Activated CD4-positive, alpha-beta memory T cell treated with anti-CD3 and anti-CD28 coated beads for 36 hours (primary cell): ENCODE measurements at regions of chr6 and their contacts with region 1.

Region 1: DNA sequence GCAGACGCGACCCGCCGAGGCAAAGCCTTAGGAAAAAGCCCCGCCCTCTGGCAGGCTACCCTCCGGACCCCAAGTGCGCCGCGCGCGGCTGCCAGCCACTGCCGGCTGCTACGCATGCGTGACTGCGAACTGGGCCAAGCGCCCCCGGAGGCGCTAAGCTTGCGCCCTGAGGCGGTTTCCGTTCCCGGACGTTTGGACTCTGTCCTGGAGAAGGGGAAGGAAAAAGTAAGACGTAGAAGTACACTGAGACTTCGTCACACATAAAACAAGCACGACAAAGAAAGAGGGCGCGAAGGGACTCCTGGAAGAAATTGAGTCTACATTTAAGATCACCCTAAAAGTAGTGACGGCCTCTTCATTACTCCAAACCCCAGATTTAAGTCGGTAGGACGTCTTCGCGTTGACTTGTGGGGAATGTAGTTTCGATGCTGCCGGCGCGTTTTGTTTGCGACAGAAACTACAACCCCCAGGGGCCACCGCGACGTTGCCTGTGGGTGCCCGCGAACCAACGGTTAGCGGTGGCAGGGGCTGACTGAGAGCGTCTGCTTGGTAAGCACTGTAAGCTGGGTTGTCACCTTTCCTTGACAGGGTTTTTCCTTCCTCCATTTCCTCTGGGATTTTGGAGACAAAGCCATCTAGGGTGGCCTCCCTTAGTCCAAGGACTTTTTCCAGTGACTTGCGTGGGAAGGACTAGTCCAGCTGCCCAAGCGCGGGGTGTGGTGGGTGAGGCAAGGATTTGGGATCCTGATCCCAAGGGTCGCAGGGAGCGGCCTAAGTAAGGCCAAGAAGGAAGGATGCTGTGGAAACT is at the start of gene CEP57L1:
- DNase-seq: peak; percentile 97
- H3K4me3 Mint-ChIP-seq: peak within 1 kb of the TSS; percentile 96
- H3K27ac Mint-ChIP-seq: peak within 1 kb of the TSS; percentile 100
- H3K4me1 Mint-ChIP-seq: peaks cover 44% of the 10 kb centered on the region
- H3K27me3 Mint-ChIP-seq: no peaks in the 10 kb centered on the region
- total RNA-seq, gene CEP57L1: 23.0 to 27.8 TPM

Region 2: DNA sequence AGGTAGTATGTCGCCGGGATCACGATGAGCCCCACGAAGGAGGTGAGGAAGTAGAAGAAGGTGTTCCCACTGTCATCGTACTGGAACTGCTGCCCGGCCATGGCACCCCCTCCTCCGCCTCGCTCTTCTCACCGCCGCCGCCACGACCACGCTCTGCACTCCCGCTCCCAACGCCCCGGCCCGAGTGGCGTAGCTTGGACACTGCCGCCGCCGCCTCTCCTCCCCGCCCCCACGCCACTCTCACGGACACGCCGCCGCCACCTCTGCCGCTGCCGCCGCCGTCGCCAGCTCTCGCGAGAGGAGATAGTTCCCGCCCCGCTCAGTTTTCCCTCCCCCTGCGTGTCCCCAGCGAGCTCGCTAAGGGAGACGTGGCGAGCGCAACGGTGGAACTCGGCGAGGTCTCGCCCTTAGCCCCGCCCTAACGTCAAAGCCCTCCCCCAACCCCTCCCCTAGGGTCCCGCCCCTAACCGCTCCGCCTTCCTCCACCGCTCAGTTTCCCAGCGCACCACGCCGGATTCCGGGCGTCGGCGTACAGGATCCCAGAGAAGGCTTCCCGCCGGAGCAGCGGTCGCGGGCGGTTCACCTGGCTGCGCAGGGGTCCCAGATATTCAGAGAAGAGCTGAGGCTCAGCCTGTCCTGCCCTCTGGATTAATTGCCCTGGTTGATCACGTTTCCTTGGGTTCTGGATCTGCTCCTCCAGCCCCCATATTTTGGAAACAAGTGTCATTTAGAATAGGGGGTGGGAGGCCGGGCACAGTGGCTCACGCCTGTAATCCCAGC is 1137.1 kb before region 1 on chr6 and contains the start of gene SEC63:
- CTCF ChIA-PET with region 1: no interaction called
- POLR2A ChIA-PET with region 1: no interaction called
- intact Hi-C with region 1: loop called (anchors 5 kb)
- DNase-seq: peak; percentile 99
- H3K4me3 Mint-ChIP-seq: peak within 1 kb of the TSS; percentile 100
- H3K27ac Mint-ChIP-seq: peak within 1 kb of the TSS; percentile 95
- H3K4me1 Mint-ChIP-seq: peaks cover 26% of the 10 kb centered on the region
- H3K27me3 Mint-ChIP-seq: no peaks in the 10 kb centered on the region
- total RNA-seq, gene SEC63: 90.6 to 95.9 TPM

Region 3: DNA sequence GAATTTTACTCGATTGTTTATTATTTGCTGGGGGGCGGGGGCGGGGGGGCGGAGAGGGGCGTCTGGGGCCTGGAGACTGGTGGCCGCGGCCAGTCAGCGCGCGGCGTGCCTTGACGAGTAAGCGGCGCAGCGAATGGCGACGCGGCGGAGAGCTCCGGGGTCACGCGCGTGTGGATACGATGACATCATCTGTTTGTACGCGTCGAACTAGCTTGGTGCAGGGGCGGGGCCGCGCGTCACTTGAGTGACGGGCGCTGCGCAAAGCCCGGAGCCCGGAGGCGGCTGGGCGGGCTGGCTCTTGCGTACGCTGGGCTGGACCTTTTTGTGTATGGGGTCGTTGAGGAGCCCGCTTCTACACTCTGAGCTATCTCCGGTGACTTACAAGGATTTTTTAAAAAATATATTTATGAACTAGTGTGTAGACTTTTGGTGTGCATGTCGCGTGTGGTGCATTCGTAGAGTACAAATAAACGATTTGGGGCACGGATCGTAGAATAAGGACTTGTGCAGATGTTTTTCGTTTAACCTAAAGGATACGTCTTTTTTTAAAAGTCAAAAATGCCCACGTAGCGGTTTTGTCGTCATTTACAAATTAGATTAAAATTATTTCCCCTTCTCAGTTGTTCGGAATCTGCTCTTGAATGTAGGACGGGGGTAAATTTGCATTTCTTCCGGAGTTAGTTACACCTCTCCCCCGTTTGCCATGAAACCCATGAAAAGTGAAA is 536.7 kb before region 1 on chr6:
- CTCF ChIA-PET with region 1: no interaction called
- POLR2A ChIA-PET with region 1: interaction called, 5 read pairs
- intact Hi-C with region 1: loop called (anchors 1 kb)
- DNase-seq: peak; percentile 97
- H3K4me3 Mint-ChIP-seq: peak overlapping the region; percentile 93
- H3K27ac Mint-ChIP-seq: peak overlapping the region; percentile 96
- H3K4me1 Mint-ChIP-seq: peaks cover 25% of the 10 kb centered on the region
- H3K27me3 Mint-ChIP-seq: no peaks in the 10 kb centered on the region

Region 4: GRCh38 chr6:109202409-109203284 is 107.4 kb after region 1 on chr6:
- CTCF ChIA-PET with region 1: no interaction called
- POLR2A ChIA-PET with region 1: no interaction called
- intact Hi-C with region 1: loop called (anchors 1 kb)
- DNase-seq: peak; percentile 38
- H3K4me3 Mint-ChIP-seq: no peak overlapping the region
- H3K27ac Mint-ChIP-seq: peak overlapping the region; percentile 53
- H3K4me1 Mint-ChIP-seq: peaks cover 17% of the 10 kb centered on the region
- H3K27me3 Mint-ChIP-seq: no peaks in the 10 kb centered on the region

Region 5: GRCh38 chr6:109212683-109213082 is 117.5 kb after region 1 on chr6:
- CTCF ChIA-PET with region 1: no interaction called
- POLR2A ChIA-PET with region 1: no interaction called
- intact Hi-C with region 1: no loop called
- DNase-seq: no peak
- H3K4me3 Mint-ChIP-seq: no peak overlapping the region
- H3K27ac Mint-ChIP-seq: no peak overlapping the region
- H3K4me1 Mint-ChIP-seq: no peaks in the 10 kb centered on the region
- H3K27me3 Mint-ChIP-seq: peaks cover 9% of the 10 kb centered on the region

Region 6: GRCh38 chr6:109440331-109441068 is 345.3 kb after region 1 on chr6 and contains the starts of genes PPIL6 and SMPD2:
- CTCF ChIA-PET with region 1: no interaction called
- POLR2A ChIA-PET with region 1: no interaction called
- intact Hi-C with region 1: loop called (anchors 2 kb)
- DNase-seq: peak; percentile 84
- H3K4me3 Mint-ChIP-seq: peak within 1 kb of the TSS; percentile 87
- H3K27ac Mint-ChIP-seq: peak within 1 kb of the TSS; percentile 82
- H3K4me1 Mint-ChIP-seq: peaks cover 21% of the 10 kb centered on the region
- H3K27me3 Mint-ChIP-seq: no peaks in the 10 kb centered on the region
- total RNA-seq, gene PPIL6: 0.43 to 0.46 TPM
- total RNA-seq, gene SMPD2: 9.7 TPM

Region 7: GRCh38 chr6:109482905-109483735 is 387.9 kb after region 1 on chr6 and contains the start of gene ZBTB24:
- CTCF ChIA-PET with region 1: no interaction called
- POLR2A ChIA-PET with region 1: no interaction called
- intact Hi-C with region 1: loop called (anchors 2 kb)
- DNase-seq: peak; percentile 93
- H3K4me3 Mint-ChIP-seq: peak within 1 kb of the TSS; percentile 96
- H3K27ac Mint-ChIP-seq: peak within 1 kb of the TSS; percentile 90
- H3K4me1 Mint-ChIP-seq: peaks cover 48% of the 10 kb centered on the region
- H3K27me3 Mint-ChIP-seq: no peaks in the 10 kb centered on the region
- total RNA-seq, gene ZBTB24: 10.9 to 11.8 TPM

Region 8: GRCh38 chr6:110179401-110180227 is 1084.4 kb after region 1 on chr6 and contains the start of gene WASF1:
- CTCF ChIA-PET with region 1: no interaction called
- POLR2A ChIA-PET with region 1: no interaction called
- intact Hi-C with region 1: loop called (anchors 2 kb)
- DNase-seq: peak; percentile 94
- H3K4me3 Mint-ChIP-seq: peak within 1 kb of the TSS; percentile 85
- H3K27ac Mint-ChIP-seq: no peak within 1 kb of the TSS
- H3K4me1 Mint-ChIP-seq: peaks cover 5% of the 10 kb centered on the region
- H3K27me3 Mint-ChIP-seq: peaks cover 10% of the 10 kb centered on the region
- total RNA-seq, gene WASF1: 1.9 to 2.6 TPM